ENCODE measurements at regions of chr2 and their contacts with region 1.

Region 1: DNA sequence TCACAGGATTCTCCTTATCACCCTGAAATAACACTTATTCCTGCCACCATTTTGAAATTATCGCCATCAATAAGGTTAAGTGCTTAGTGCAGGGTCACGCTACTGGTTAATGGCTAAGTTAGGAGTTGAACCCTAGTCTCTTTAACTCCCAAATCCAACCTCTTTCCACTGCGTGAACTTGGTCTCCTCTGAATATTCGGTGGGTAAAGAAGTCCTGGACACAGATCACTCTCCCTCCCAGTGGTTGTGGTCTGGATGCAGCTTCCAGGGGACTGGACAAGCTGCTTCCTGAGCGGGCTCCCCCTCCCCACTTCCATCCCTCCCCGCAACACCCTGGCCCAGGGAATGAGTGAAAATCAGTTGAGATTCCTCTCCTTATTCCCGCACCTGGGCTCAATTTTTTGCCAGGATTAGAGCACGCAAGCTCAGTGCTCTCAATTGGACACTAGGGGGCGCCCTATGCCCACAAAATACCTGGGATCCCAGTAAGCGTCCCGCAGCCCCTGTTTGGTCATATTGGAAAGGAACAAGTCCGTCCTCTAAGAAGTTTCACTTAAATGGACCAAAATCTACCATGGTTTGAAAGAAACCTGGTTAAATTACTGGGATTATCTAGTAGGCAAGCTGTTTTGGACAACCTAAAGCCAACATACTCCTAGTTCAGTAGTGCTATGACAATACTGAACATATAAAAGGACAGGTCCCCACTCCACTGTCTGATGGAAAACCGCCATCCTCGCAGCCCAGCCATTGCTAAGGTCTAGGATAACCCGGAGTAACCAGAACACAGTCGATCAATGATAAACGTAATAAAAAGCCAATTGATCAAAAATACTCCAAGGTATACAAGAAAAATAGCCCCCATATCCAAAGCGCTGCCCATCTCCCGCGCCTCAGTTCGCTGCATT is 40.4 kb downstream of the DHRS9 start:
- DNase-seq: peak; percentile 82
- H3K4me3 Mint-ChIP-seq: no peak overlapping the region
- H3K27ac Mint-ChIP-seq: no peak overlapping the region
- H3K4me1 Mint-ChIP-seq: peaks cover 39% of the 10 kb centered on the region
- H3K27me3 Mint-ChIP-seq: peaks cover 3% of the 10 kb centered on the region

Region 2: GRCh38 chr2:168961450-168962229 is 148.1 kb before region 1 on chr2:
- CTCF ChIA-PET with region 1: interaction called, 20 read pairs
- intact Hi-C with region 1: loop called (anchors 1 kb)
- DNase-seq: peak; percentile 27
- H3K4me3 Mint-ChIP-seq: no peak overlapping the region
- H3K27ac Mint-ChIP-seq: no peak overlapping the region
- H3K4me1 Mint-ChIP-seq: peaks cover 14% of the 10 kb centered on the region
- H3K27me3 Mint-ChIP-seq: peaks cover 4% of the 10 kb centered on the region

Region 3: GRCh38 chr2:169012812-169013627 is 96.7 kb before region 1 on chr2:
- CTCF ChIA-PET with region 1: no interaction called
- intact Hi-C with region 1: no loop called
- DNase-seq: no peak
- H3K4me3 Mint-ChIP-seq: no peak overlapping the region
- H3K27ac Mint-ChIP-seq: no peak overlapping the region
- H3K4me1 Mint-ChIP-seq: peaks cover 3% of the 10 kb centered on the region
- H3K27me3 Mint-ChIP-seq: peaks cover 4% of the 10 kb centered on the region

Region 4: GRCh38 chr2:169069341-169069740 is 40.4 kb before region 1 on chr2 and contains the start of gene DHRS9:
- CTCF ChIA-PET with region 1: interaction called, 4 read pairs
- intact Hi-C with region 1: loop called (anchors 1 kb)
- DNase-seq: peak; percentile 63
- H3K4me3 Mint-ChIP-seq: peak within 1 kb of the TSS; percentile 37
- H3K27ac Mint-ChIP-seq: no peak within 1 kb of the TSS
- H3K4me1 Mint-ChIP-seq: peaks cover 39% of the 10 kb centered on the region
- H3K27me3 Mint-ChIP-seq: peaks cover 2% of the 10 kb centered on the region
- total RNA-seq, gene DHRS9: 2.0 to 2.6 TPM

Region 5: DNA sequence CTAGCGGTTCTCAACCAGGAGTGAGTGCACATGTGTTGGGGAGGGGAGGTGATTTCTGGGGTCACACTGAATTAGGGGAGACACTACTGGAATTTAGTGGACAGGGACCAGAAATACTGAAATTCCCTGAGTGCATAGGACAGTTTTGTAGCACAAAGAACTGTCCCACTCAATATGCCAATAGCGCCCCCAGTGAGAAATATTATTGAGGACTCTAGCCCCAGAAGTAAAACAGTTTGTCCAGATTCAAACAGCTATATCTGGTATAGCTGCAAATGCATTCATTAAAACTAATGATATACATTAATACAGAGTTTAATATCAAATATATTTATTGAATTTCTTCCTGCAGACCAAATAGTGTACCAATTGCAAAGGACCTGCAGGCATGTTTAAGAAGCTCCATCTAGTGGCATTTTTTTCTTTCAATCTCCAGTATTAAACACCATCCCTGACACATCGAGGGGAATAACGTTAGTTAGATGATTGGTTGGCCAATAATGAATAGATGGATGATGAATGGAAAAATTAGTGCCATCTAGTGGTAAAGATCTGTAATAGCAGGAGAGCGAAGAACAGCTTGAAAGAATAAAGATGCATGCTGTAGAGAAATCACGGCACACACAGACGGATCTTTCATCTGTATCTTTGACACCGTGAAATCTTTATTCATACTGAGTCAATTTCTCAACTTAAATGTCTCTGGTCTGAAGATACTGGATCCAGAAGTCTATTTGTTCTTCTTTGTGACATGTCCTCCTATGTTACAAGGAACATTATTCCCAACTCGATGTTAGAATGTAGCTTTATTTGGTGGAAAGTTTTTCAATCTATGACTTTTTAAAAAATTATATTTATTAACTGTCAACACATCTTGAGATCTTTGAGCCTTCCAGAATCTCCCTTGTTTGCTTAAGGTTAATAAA is 22.1 kb after region 1 on chr2:
- CTCF ChIA-PET with region 1: interaction called, 102 read pairs
- intact Hi-C with region 1: loop called (anchors 1 kb)
- DNase-seq: no peak
- H3K4me3 Mint-ChIP-seq: no peak overlapping the region
- H3K27ac Mint-ChIP-seq: no peak overlapping the region
- H3K4me1 Mint-ChIP-seq: no peaks in the 10 kb centered on the region
- H3K27me3 Mint-ChIP-seq: no peaks in the 10 kb centered on the region

Region 6: GRCh38 chr2:169173876-169174275 is 64.1 kb after region 1 on chr2:
- CTCF ChIA-PET with region 1: no interaction called
- intact Hi-C with region 1: no loop called
- DNase-seq: no peak
- H3K4me3 Mint-ChIP-seq: no peak overlapping the region
- H3K27ac Mint-ChIP-seq: no peak overlapping the region
- H3K4me1 Mint-ChIP-seq: no peaks in the 10 kb centered on the region
- H3K27me3 Mint-ChIP-seq: peaks cover 21% of the 10 kb centered on the region

Region 7: GRCh38 chr2:169221745-169222369 is 112.1 kb after region 1 on chr2:
- CTCF ChIA-PET with region 1: interaction called, 5 read pairs
- intact Hi-C with region 1: loop called (anchors 1 kb)
- DNase-seq: no peak
- H3K4me3 Mint-ChIP-seq: no peak overlapping the region
- H3K27ac Mint-ChIP-seq: no peak overlapping the region
- H3K4me1 Mint-ChIP-seq: no peaks in the 10 kb centered on the region
- H3K27me3 Mint-ChIP-seq: no peaks in the 10 kb centered on the region

Region 8: GRCh38 chr2:169294001-169294675 is 184.4 kb after region 1 on chr2:
- CTCF ChIA-PET with region 1: no interaction called
- intact Hi-C with region 1: no loop called
- DNase-seq: no peak
- H3K4me3 Mint-ChIP-seq: no peak overlapping the region
- H3K27ac Mint-ChIP-seq: no peak overlapping the region
- H3K4me1 Mint-ChIP-seq: no peaks in the 10 kb centered on the region
- H3K27me3 Mint-ChIP-seq: peaks cover 20% of the 10 kb centered on the region

Region 9: GRCh38 chr2:169336695-169337094 is 226.9 kb after region 1 on chr2:
- CTCF ChIA-PET with region 1: no interaction called
- intact Hi-C with region 1: no loop called
- DNase-seq: no peak
- H3K4me3 Mint-ChIP-seq: no peak overlapping the region
- H3K27ac Mint-ChIP-seq: no peak overlapping the region
- H3K4me1 Mint-ChIP-seq: no peaks in the 10 kb centered on the region
- H3K27me3 Mint-ChIP-seq: peaks cover 10% of the 10 kb centered on the region

Region 10: GRCh38 chr2:169397697-169398096 is 287.9 kb after region 1 on chr2:
- CTCF ChIA-PET with region 1: interaction called, 7 read pairs
- intact Hi-C with region 1: loop called (anchors 2 kb)
- DNase-seq: no peak
- H3K4me3 Mint-ChIP-seq: no peak overlapping the region
- H3K27ac Mint-ChIP-seq: no peak overlapping the region
- H3K4me1 Mint-ChIP-seq: no peaks in the 10 kb centered on the region
- H3K27me3 Mint-ChIP-seq: peaks cover 17% of the 10 kb centered on the region

Region 11: DNA sequence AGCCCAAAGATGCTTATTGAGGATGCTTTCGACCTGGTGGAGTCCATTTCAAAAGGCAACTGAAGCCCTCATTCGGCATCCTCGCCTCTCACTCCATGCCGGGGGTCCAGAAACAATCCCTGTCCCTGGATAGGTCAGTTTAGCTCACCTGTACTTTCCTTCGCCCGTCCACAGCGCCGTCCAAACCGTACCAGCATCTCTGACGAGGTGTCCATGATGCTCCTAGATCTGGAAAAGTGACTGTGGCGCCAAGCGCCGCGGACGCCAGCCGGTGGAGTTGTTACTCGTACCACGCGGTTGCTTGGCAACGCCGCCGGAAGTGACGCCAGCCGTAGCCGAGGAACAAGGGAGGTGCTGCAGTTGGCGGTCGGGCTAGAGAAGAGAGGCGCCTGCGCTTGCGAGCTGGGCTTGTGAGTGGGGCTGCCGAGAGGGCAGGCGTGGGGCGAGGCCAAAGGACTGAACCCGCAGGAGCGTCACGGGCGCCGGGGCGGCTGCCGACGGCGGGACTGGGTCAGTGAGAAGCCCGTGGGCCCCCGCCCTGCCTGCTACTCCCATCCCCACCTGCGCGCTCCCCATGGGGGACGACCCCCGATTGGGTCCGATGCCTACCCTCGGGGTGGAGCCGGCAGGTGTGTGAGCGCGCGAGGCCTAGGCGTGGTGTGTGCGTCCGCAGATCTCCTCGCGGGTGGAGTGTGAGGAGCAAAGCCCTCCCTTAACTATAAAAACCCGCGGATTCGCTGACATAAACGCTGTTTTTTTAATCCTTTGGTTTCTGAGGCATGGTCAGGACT is 584.6 kb after region 1 on chr2 and contains the starts of genes CFAP210 and PHOSPHO2:
- CTCF ChIA-PET with region 1: no interaction called
- intact Hi-C with region 1: loop called (anchors 5 kb)
- DNase-seq: peak; percentile 98
- H3K4me3 Mint-ChIP-seq: peak within 1 kb of the TSS; percentile 84
- H3K27ac Mint-ChIP-seq: peak within 1 kb of the TSS; percentile 71
- H3K4me1 Mint-ChIP-seq: peaks cover 13% of the 10 kb centered on the region
- H3K27me3 Mint-ChIP-seq: no peaks in the 10 kb centered on the region
- total RNA-seq, gene CFAP210: not detected
- total RNA-seq, gene PHOSPHO2: 1.2 TPM

Measured in activated naive CD4-positive, alpha-beta T cell treated with anti-CD3 and anti-CD28 coated beads for 36 hours (primary cell).